HEK293T (cell line): ENCODE measurements at regions of chr22 and their contacts with region 1.

Region 1: DNA sequence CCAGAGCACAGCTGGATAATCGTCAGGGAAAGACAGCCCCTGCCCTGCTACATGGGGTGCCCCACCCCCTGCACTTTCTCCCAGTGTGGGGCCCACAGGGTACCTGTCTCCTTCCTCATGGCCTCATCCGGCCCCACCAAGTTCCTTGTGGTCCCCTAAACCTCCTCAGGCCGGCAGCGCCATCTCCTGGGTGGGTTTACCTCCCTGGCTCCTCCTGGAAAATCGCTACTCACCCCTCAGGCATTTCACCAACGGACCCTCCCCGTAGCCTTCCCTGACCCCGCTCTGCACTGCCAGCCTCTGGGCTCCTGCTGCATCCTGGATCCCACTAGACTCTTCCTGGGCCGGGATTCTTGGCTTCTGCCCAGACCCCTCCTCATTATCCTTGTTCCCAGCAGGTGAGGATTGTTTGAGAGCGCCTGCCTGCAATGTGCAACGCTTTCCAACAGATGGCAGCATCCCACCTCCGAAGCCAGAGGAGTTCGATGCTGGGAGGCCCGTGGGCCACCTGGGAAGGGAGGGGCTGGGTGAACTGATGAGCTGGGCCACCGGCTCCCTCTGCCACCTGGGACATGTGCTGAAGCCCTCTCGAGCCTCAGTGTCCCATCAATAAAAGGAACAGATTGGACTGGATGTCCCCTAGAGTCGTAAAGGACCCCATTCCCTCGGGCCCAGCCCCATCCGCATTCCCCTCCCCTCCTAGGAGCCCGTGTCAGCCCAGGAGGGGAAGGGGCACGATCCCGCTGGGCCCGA is 44.2 kb upstream of the TTLL12 start:
- DNase-seq: peak; percentile 87

Region 2: DNA sequence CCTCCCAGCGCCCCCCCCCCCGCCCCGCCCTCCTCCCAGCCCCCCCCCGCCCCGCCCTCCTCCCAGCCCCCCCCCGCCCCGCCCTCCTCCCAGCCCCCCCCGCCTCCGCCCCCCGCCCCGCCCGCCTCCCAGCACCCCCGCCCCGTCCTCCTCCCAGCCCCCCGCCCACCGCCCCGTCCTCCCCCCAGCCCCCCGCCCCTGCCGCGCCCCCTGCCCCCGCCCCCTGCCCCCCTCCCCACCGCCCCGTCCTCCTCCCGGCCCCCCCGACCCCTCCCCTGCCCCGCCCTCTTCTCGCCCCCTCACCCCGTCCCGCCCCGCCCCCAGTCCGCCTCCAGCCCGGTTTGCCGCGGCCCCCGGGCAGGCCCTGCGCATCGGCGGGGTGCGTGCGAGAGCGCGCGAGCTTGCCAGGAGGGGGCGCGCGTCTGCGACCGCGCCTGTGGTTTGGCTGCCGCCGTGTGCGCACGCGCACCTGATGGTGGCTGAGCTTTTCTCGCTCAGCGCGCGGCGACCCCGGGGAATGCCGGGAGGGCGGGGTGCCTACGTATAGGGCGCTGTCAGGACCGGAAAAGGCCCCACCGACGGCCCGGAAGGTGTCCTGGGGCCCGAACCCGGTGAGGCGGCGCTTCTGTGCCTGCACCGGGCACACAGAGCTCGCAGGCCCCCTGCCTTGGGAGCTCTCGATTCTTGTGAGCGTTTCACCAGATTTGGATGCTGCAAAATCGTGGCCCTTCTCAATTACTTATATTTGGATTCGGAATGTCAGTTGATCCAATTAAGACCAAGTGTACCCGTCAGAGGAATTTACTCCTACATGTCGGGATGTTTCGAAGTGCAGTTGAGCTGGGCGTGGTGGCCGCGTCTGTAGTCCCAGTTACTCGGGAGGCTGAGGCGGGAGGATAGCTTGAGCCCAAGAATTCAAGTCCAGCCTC is 43.7 kb before region 1 on chr22:
- CTCF ChIA-PET with region 1: interaction called, 8 read pairs
- POLR2A ChIA-PET with region 1: interaction called, 19 read pairs
- DNase-seq: peak; percentile 97

Region 3: GRCh38 chr22:43263645-43264514 is 32.7 kb after region 1 on chr22:
- CTCF ChIA-PET with region 1: interaction called, 14 read pairs
- POLR2A ChIA-PET with region 1: no interaction called
- DNase-seq: peak; percentile 68

Region 4: GRCh38 chr22:43385770-43386641 is 154.9 kb after region 1 on chr22:
- CTCF ChIA-PET with region 1: interaction called, 11 read pairs
- POLR2A ChIA-PET with region 1: no interaction called
- DNase-seq: peak; percentile 90